ENCODE measurements at regions of chr14 and their contacts with region 1.

Region 1: GRCh38 chr14:81220830-81221578 is at the start of gene GTF2A1:
- DNase-seq: peak; percentile 94 to 98
- ATAC-seq: peak; percentile 87 to 93 (median 89)
- H3K4me3 ChIP-seq: peak within 1 kb of the TSS; percentile 87
- H3K27ac ChIP-seq: peak within 1 kb of the TSS; percentile 97
- H3K4me1 ChIP-seq: peaks cover 22% of the 10 kb centered on the region
- H3K27me3 ChIP-seq: no peaks in the 10 kb centered on the region
- CTCF ChIP-seq: no peak
- total RNA-seq, gene GTF2A1: 25.5 to 45.1 (median 33.0) TPM

Region 2: DNA sequence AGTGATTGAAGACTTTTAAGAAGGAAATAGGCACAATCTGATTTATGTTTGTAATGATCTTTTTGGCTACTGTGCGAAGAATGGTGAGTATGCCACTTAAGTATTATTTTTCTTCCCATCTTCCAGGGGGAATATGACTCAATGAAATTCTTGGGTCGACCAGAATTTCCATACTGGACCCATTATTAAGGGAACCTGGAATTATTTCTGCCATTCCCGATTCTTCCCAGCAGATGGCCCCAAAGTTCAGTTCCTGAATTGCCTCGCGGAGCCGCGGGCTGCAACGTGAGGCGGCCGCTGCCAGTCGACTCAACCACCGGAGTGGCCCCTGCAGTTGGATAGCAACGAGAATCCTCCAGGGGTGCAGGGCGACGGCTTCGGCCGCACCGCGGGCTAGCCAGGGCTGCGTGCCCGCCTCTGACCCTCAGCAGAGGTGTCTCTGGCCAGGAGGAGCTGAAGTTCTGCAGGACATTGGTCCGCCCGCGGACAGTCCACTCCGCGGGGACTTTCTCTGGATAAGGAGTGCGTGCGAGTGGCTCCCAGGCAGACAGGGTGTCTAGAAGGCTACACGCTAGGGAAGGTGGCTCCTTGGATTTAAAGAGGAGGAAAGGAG is 266.2 kb before region 1 on chr14:
- intact Hi-C with region 1: loop called in 1 of 2 experiments (anchors 10 kb)
- DNase-seq: peak; percentile 80 to 86
- ATAC-seq: peak; percentile 93 to 98 (median 96)
- H3K4me3 ChIP-seq: peak overlapping the region; percentile 73
- H3K27ac ChIP-seq: no peak overlapping the region
- H3K4me1 ChIP-seq: peaks cover 5% of the 10 kb centered on the region
- H3K27me3 ChIP-seq: no peaks in the 10 kb centered on the region
- CTCF ChIP-seq: peak; percentile 84

Region 3: GRCh38 chr14:81269100-81269978 is 48.3 kb after region 1 on chr14:
- intact Hi-C with region 1: loop called in 1 of 2 experiments (anchors 5 kb)
- DNase-seq: no peak
- ATAC-seq: peak; percentile 90 to 94 (median 92)
- H3K4me3 ChIP-seq: peak overlapping the region; percentile 31
- H3K27ac ChIP-seq: peak overlapping the region; percentile 67
- H3K4me1 ChIP-seq: peaks cover 42% of the 10 kb centered on the region
- H3K27me3 ChIP-seq: no peaks in the 10 kb centered on the region
- CTCF ChIP-seq: peak; percentile 87

Region 4: DNA sequence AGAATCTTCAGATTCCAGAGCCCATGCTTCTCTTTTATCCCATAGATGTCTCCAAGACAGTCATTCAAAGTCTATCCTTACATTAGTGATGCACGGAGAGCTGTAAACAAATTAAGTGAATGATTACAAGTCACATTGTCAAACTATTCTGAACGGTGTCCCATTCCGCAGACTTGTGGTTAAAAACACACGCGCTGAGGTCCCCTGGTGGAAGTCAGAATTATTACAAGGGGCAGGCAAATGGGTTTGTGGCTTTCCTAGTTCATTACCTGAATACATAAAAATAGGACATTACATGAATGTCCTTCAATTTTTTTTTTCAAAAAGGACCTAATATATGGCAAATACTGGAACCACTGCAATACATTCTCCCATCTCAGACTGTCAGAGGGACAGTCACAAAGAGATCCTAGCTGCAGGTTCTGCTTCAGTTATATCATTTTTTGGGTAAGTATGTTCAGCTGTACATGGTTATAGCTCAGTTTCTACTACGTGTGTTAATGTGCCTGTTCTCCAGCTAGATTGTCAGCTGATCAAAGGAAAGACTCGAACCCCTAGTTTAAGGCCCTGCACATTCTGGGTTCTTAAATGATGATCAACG is 232.3 kb after region 1 on chr14:
- intact Hi-C with region 1: loop called in 1 of 2 experiments (anchors 5 kb)
- DNase-seq: peak; percentile 40 to 69
- ATAC-seq: peak; percentile 39 to 70 (median 65)
- H3K4me3 ChIP-seq: peak overlapping the region; percentile 35
- H3K27ac ChIP-seq: peak overlapping the region; percentile 82
- H3K4me1 ChIP-seq: peaks cover 34% of the 10 kb centered on the region
- H3K27me3 ChIP-seq: no peaks in the 10 kb centered on the region
- CTCF ChIP-seq: peak; percentile 91

Region 5: GRCh38 chr14:81464247-81465002 is 243.4 kb after region 1 on chr14:
- intact Hi-C with region 1: loop called in 1 of 2 experiments (anchors 5 kb)
- DNase-seq: no peak
- ATAC-seq: peak in 3 of 4 donors; percentile 54 to 72 (median 58)
- H3K4me3 ChIP-seq: peak overlapping the region; percentile 69
- H3K27ac ChIP-seq: peak overlapping the region; percentile 53
- H3K4me1 ChIP-seq: no peaks in the 10 kb centered on the region
- H3K27me3 ChIP-seq: no peaks in the 10 kb centered on the region
- CTCF ChIP-seq: peak; percentile 91